Naive thymus-derived CD4-positive, alpha-beta T cell (primary cell): ENCODE measurements at regions of chr6 and their contacts with region 1.

Region 1: GRCh38 chr6:40387127-40387870 is 199.9 kb downstream of the LRFN2 start:
- DNase-seq: peak in 4 of 9 donors; percentile 9 to 33 (median 29)
- ATAC-seq: peak; percentile 35
- H3K4me3 ChIP-seq: no peak overlapping the region
- H3K4me3 Mint-ChIP-seq: peak overlapping the region in 8 of 10 donors; percentile 6 to 72 (median 48)
- H3K27ac ChIP-seq: peak overlapping the region; percentile 64
- H3K27ac Mint-ChIP-seq: peak overlapping the region; percentile 37 to 94 (median 89)
- H3K4me1 ChIP-seq: peaks cover 0 to 69% of the 10 kb centered on the region in 2 donors
- H3K4me1 Mint-ChIP-seq: peaks cover 39 to 74% (median 49%) of the 10 kb centered on the region in 7 donors
- H3K27me3 ChIP-seq: no peaks in the 10 kb centered on the region
- H3K27me3 Mint-ChIP-seq: peaks cover 0 to 10% (median 8%) of the 10 kb centered on the region in 5 donors

Region 2: DNA sequence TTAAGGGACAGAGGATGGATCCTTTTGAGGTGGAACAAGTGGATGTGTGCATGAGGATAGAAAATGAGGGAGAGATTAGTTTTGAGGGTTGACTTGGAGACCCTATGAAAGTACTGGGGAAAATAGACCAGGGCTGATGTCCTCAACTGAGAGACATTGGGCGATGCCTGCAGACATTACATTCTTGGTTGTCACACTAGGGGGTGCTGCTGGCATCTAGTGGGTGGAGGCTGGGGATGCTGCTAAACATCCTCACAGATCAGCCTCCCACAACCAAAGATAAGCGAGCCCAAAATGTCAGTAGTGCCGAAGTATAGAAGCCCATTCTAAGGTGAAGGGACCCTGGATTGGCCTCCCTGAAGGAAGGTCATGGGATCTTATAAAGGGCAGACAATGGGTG is 516.3 kb before region 1 on chr6:
- CTCF ChIA-PET with region 1: no interaction called
- POLR2A ChIA-PET with region 1: no interaction called
- intact Hi-C with region 1: no loop called
- DNase-seq: no peak
- ATAC-seq: no peak
- H3K4me3 ChIP-seq: no peak overlapping the region
- H3K4me3 Mint-ChIP-seq: no peak overlapping the region
- H3K27ac ChIP-seq: no peak overlapping the region
- H3K27ac Mint-ChIP-seq: no peak overlapping the region
- H3K4me1 ChIP-seq: no peaks in the 10 kb centered on the region
- H3K4me1 Mint-ChIP-seq: no peaks in the 10 kb centered on the region
- H3K27me3 ChIP-seq: no peaks in the 10 kb centered on the region
- H3K27me3 Mint-ChIP-seq: peaks cover 0 to 24% (median 1%) of the 10 kb centered on the region in 5 donors

Region 3: GRCh38 chr6:40210628-40211056 is 176.7 kb before region 1 on chr6:
- CTCF ChIA-PET with region 1: no interaction called
- POLR2A ChIA-PET with region 1: no interaction called
- intact Hi-C with region 1: no loop called
- DNase-seq: no peak
- ATAC-seq: no peak
- H3K4me3 ChIP-seq: no peak overlapping the region
- H3K4me3 Mint-ChIP-seq: no peak overlapping the region
- H3K27ac ChIP-seq: no peak overlapping the region
- H3K27ac Mint-ChIP-seq: no peak overlapping the region
- H3K4me1 ChIP-seq: no peaks in the 10 kb centered on the region
- H3K4me1 Mint-ChIP-seq: no peaks in the 10 kb centered on the region
- H3K27me3 ChIP-seq: peaks cover 0 to 5% of the 10 kb centered on the region in 2 donors
- H3K27me3 Mint-ChIP-seq: peaks cover 0 to 44% (median 28%) of the 10 kb centered on the region in 5 donors

Region 4: DNA sequence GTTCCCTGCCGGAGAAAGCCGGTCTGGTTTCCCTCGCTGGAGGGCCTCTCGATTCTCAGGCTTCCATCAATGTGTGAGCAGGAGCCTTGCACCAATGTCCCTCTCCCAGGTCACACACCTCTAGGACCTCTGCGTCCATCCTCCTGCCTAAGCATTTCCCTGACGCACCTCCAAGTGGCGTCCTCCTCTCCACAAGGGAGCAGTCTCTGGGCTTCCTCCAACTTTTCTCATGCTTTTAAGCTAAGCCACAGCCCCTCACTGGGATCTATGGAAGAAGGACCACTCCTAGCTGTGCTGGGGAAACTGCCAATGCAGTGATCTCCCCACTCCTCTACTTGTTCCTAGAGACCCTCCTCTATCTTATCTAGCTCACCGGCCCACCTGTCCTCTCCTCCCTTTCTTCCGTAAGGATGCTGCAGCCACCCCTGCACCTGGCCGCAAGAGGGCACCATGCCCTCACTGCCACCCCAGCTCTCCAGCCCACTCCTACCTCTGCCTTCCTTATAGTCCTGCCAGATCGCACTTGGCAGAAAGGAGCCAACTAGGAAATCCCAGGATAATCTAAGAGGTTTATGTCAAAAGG is 58.8 kb before region 1 on chr6:
- CTCF ChIA-PET with region 1: no interaction called
- POLR2A ChIA-PET with region 1: no interaction called
- intact Hi-C with region 1: loop called in 1 of 2 experiments (anchors 5 kb)
- DNase-seq: peak in 8 of 9 donors; percentile 3 to 73 (median 43)
- ATAC-seq: peak; percentile 70
- H3K4me3 ChIP-seq: no peak overlapping the region
- H3K4me3 Mint-ChIP-seq: peak overlapping the region in 1 of 10 donors; percentile 3
- H3K27ac ChIP-seq: no peak overlapping the region
- H3K27ac Mint-ChIP-seq: peak overlapping the region in 3 of 9 donors; percentile 9 to 36 (median 23)
- H3K4me1 ChIP-seq: peaks cover 0 to 10% of the 10 kb centered on the region in 2 donors
- H3K4me1 Mint-ChIP-seq: peaks cover 0 to 65% (median 6%) of the 10 kb centered on the region in 7 donors
- H3K27me3 ChIP-seq: no peaks in the 10 kb centered on the region
- H3K27me3 Mint-ChIP-seq: peaks cover 4 to 45% (median 13%) of the 10 kb centered on the region in 5 donors

Region 5: GRCh38 chr6:40369891-40370290 is 17.4 kb before region 1 on chr6:
- CTCF ChIA-PET with region 1: no interaction called
- POLR2A ChIA-PET with region 1: no interaction called
- intact Hi-C with region 1: loop called in 1 of 2 experiments (anchors 1 kb)
- DNase-seq: no peak
- ATAC-seq: no peak
- H3K4me3 ChIP-seq: no peak overlapping the region
- H3K4me3 Mint-ChIP-seq: peak overlapping the region in 2 of 10 donors; percentile 30 to 65
- H3K27ac ChIP-seq: no peak overlapping the region
- H3K27ac Mint-ChIP-seq: peak overlapping the region in 2 of 9 donors; percentile 1 to 82
- H3K4me1 ChIP-seq: peaks cover 0 to 12% of the 10 kb centered on the region in 2 donors
- H3K4me1 Mint-ChIP-seq: peaks cover 0 to 37% (median 7%) of the 10 kb centered on the region in 7 donors
- H3K27me3 ChIP-seq: no peaks in the 10 kb centered on the region
- H3K27me3 Mint-ChIP-seq: peaks cover 0 to 3% (median 2%) of the 10 kb centered on the region in 5 donors

Region 6: GRCh38 chr6:40425192-40425919 is 38.1 kb after region 1 on chr6:
- CTCF ChIA-PET with region 1: no interaction called
- POLR2A ChIA-PET with region 1: no interaction called
- intact Hi-C with region 1: loop called in 1 of 2 experiments (anchors 1 kb)
- DNase-seq: no peak
- ATAC-seq: no peak
- H3K4me3 ChIP-seq: no peak overlapping the region
- H3K4me3 Mint-ChIP-seq: no peak overlapping the region
- H3K27ac ChIP-seq: no peak overlapping the region
- H3K27ac Mint-ChIP-seq: no peak overlapping the region
- H3K4me1 ChIP-seq: no peaks in the 10 kb centered on the region
- H3K4me1 Mint-ChIP-seq: peaks cover 0 to 10% (median 0%) of the 10 kb centered on the region in 7 donors
- H3K27me3 ChIP-seq: no peaks in the 10 kb centered on the region
- H3K27me3 Mint-ChIP-seq: peaks cover 0 to 51% (median 0%) of the 10 kb centered on the region in 5 donors

Region 7: DNA sequence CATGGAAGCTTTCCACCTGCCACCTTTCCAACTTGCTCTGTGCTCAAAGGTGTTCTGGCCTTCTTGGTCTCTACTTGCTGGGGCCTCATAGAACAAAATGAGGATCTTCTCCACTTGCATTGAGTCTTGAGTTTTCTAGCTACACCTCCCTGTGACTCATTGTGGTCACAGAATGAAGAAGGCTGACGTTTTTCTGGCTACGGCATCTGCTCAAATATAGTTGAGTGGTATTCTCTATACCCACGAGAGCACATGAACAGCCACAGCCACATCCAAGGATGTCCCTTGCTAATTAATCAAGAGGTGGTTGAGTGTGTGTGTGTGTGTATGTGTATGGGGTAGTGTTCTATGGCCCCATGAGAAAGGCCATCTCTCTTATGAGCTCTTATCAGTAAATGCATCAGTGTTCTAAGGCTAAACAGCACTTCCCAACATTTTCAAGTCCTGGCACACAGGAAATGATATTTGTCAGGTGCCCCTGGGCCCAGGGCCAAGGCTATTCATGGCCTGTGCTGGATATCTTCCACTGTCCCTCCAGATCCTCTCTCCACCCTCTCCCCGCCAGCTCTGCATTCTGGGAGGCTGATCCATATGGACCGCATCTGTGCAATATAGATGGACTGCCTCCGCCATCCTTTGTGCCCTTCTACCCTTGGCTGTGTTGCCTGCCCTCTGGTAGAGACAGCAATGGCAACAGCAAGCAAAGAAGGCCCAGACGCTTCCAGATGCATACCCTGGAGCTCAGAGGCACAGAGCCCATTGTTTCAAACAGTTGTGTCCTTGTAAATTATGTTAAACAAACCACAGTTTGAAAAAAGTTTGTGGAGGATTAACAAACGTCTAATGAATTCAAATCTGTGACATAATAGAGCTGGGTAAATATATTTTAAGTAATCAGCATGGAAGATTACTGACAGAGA is 49.6 kb after region 1 on chr6:
- CTCF ChIA-PET with region 1: no interaction called
- POLR2A ChIA-PET with region 1: no interaction called
- intact Hi-C with region 1: loop called in 1 of 2 experiments (anchors 2 kb)
- DNase-seq: peak in 1 of 9 donors; percentile 39
- ATAC-seq: peak; percentile 73
- H3K4me3 ChIP-seq: no peak overlapping the region
- H3K4me3 Mint-ChIP-seq: peak overlapping the region in 1 of 10 donors; percentile 75
- H3K27ac ChIP-seq: no peak overlapping the region
- H3K27ac Mint-ChIP-seq: peak overlapping the region in 1 of 9 donors; percentile 83
- H3K4me1 ChIP-seq: peaks cover 0 to 8% of the 10 kb centered on the region in 2 donors
- H3K4me1 Mint-ChIP-seq: peaks cover 0 to 45% (median 0%) of the 10 kb centered on the region in 7 donors
- H3K27me3 ChIP-seq: no peaks in the 10 kb centered on the region
- H3K27me3 Mint-ChIP-seq: peaks cover 0 to 5% (median 0%) of the 10 kb centered on the region in 5 donors

Region 8: DNA sequence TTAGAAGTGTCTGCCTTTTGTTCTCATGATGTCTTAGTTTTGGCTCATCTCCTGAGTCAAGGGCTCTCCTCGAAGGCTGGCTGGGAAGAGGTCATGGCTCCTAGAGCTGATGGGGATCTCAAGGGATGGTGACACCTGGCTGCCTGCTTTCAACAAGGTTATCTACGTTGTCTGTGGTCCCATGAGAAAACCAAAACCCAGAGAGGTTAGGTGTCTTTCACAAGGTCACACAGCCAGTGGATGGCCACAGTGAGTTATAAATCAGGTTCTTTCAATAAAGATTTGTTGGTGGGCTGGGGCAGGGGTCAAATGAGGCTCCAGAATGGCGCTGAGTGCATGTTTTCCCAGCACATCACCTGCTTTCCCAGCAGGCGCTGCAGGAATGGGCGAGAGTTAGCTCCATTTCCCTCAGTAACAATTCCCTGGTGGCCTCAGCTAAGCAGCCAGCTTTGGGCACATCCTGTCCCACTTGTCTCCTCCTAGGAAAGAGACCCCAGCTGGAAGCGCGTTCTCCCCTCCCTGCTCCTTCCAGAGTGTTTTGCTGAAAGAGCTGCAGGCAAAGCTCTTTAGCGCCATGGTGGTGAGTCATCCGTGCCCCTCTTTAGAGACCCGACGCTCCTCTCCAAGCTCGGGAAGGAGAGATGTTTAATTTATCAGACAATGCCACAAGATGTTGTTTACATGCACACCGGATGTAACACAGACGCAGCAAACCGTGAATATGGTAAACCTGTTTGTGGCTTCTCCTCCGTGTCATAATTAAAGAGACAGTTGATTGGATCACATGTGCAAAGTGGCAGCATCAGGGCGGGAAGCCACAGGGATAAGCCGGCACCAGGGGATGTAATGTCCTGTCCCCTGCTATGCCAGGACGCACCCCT is 90.2 kb after region 1 on chr6:
- CTCF ChIA-PET with region 1: no interaction called
- POLR2A ChIA-PET with region 1: no interaction called
- intact Hi-C with region 1: loop called in 1 of 2 experiments (anchors 5 kb)
- DNase-seq: peak in 6 of 9 donors; percentile 23 to 48 (median 38)
- ATAC-seq: peak; percentile 78
- H3K4me3 ChIP-seq: no peak overlapping the region
- H3K4me3 Mint-ChIP-seq: peak overlapping the region in 4 of 10 donors; percentile 41 to 70 (median 52)
- H3K27ac ChIP-seq: no peak overlapping the region
- H3K27ac Mint-ChIP-seq: peak overlapping the region in 7 of 9 donors; percentile 10 to 82 (median 69)
- H3K4me1 ChIP-seq: peaks cover 0 to 16% of the 10 kb centered on the region in 2 donors
- H3K4me1 Mint-ChIP-seq: peaks cover 0 to 37% (median 0%) of the 10 kb centered on the region in 7 donors
- H3K27me3 ChIP-seq: no peaks in the 10 kb centered on the region
- H3K27me3 Mint-ChIP-seq: peaks cover 0 to 19% (median 0%) of the 10 kb centered on the region in 5 donors

Region 9: DNA sequence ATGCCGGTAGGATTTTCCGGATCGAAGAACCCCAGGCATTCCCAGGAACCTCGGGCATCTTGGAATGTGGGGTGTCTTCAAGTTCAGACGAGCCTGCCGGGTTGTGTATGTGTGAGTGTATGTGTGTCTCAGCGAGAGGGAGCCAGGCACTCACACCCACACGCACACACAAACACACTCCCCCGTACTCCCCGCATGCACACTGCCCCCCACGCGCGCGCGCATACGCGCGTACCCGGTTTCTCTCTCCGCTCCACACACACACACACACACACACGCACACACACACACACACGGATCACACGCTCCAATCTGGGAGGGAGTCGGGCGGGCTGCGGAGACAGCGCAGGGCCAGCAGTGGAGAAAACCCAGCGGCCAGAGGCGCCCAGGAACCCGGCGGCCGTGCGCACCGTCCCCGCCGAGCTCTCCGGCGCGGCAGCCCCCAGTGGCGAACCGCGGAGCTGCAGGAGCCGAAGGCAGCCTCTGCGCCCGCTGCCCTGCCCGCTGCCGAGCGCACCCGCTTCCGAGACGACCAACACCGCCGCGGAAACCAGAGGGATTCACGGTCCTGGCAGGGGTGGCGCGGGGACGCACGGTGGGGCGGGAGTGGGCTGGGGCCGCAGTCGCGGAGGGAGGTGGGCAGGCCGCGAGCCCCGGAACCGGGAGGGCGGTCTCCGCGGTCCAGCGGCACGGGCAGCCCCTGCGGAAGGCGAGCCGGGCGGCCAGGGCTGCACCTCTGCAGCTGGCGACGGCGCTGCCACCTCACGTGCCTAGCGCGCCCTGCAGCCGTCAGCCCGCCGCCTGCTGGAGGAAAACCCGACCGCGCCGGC is 200.2 kb after region 1 on chr6 and contains the start of gene LRFN2:
- CTCF ChIA-PET with region 1: no interaction called
- POLR2A ChIA-PET with region 1: no interaction called
- intact Hi-C with region 1: loop called in 1 of 2 experiments (anchors 5 kb)
- DNase-seq: peak; percentile 28 to 83 (median 64)
- ATAC-seq: peak; percentile 89
- H3K4me3 ChIP-seq: peak within 1 kb of the TSS; percentile 61
- H3K4me3 Mint-ChIP-seq: peak within 1 kb of the TSS; percentile 72 to 90 (median 84)
- H3K27ac ChIP-seq: peak within 1 kb of the TSS; percentile 32
- H3K27ac Mint-ChIP-seq: peak within 1 kb of the TSS in 3 of 9 donors; percentile 28 to 66 (median 50)
- H3K4me1 ChIP-seq: peaks cover 0 to 10% of the 10 kb centered on the region in 2 donors
- H3K4me1 Mint-ChIP-seq: peaks cover 0 to 36% (median 11%) of the 10 kb centered on the region in 7 donors
- H3K27me3 ChIP-seq: no peaks in the 10 kb centered on the region
- H3K27me3 Mint-ChIP-seq: peaks cover 17 to 54% (median 30%) of the 10 kb centered on the region in 5 donors
- total RNA-seq, gene LRFN2: 0.19 to 4.6 (median 0.96) TPM in 3 of 5 experiments, not detected in the others